WTC11 (cell line): ENCODE measurements at regions of chr17 and their contacts with region 1.

Region 1: DNA sequence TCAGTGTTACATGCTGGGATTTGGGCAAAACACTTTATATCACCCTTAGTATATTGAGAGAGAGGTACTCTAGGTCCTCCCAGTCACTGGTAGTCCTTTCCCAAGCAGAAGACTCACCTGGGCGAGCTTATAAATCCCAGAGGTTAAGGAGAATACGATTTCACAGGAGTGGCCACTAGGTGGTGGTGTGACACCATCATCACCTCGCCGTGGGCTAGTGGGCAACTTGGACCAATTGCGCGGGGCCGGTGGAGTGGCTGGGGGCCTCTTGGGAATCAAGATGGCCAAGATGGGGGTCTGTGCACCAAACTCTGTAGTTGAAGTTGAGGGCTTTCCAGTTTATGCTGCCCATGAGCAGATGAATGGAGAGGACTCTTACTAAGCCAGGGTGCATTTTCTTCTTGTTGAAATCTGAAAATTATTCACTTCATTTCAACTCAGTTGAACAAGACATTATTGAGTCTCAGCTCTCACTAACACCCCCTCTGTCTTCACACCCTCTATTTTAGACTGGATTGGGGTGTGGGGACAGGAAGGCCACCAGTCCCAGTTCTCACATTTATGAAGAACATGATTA is 38.2 kb upstream of the PIRT start:
- DNase-seq: peak; percentile 79
- ATAC-seq: peak; percentile 82
- H3K4me3 Mint-ChIP-seq: no peak overlapping the region
- H3K27ac Mint-ChIP-seq: no peak overlapping the region
- H3K4me1 Mint-ChIP-seq: no peaks in the 10 kb centered on the region
- H3K27me3 Mint-ChIP-seq: no peaks in the 10 kb centered on the region; the same call in none of the 2 replicates
- CTCF ChIP-seq: peak; percentile 59

Region 2: GRCh38 chr17:10699856-10700255 is 176.2 kb before region 1 on chr17:
- CTCF ChIA-PET with region 1: no interaction called
- POLR2A ChIA-PET with region 1: interaction called, 12 read pairs
- DNase-seq: no peak
- ATAC-seq: no peak
- H3K4me3 Mint-ChIP-seq: no peak overlapping the region
- H3K27ac Mint-ChIP-seq: no peak overlapping the region
- H3K4me1 Mint-ChIP-seq: peaks cover 10% of the 10 kb centered on the region
- H3K27me3 Mint-ChIP-seq: no peaks in the 10 kb centered on the region
- CTCF ChIP-seq: no peak

Region 3: DNA sequence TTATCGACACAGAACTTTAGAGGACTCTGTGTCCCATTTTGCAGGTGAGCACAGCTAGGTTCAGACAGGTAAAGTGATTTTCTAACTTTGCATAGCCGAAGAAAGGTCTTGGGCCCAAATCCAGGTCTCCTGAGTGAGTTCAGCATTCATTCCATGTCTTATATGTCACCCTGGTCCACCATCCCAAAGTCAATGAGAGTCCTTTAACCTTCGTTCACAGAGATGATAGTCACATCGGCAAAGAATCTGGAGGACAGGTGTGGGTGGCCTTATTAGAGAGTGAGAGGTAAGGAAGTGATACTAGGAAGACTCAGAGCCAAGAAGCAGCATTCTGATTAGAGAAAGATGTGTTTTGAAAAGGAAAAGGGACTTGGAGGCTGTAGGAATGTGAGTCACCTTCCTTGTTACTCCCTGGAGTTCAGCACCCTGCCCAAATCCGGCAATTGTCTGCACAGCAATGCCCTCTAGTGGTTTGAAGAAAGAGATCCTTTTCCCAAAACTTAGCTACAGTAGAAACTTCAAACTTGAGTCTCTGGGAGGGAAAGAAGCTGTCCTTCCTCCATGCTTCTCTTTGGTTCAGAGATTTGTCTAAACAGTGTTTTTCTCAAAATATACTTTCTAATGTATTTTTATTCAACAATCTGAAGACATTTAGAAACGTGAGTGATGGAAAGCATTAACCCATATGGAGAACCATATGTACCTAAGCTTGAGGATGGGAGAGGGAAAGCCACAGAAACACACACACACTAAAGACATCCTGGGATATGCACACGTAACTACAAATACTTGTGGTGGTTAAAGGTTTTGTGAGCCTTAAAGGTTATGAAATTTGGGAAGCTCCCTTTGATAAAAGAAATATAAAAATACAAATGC is 268.5 kb after region 1 on chr17:
- CTCF ChIA-PET with region 1: interaction called, 23 read pairs
- POLR2A ChIA-PET with region 1: no interaction called
- DNase-seq: peak; percentile 18
- ATAC-seq: no peak
- H3K4me3 Mint-ChIP-seq: no peak overlapping the region
- H3K27ac Mint-ChIP-seq: no peak overlapping the region
- H3K4me1 Mint-ChIP-seq: no peaks in the 10 kb centered on the region
- H3K27me3 Mint-ChIP-seq: peaks cover 7% of the 10 kb centered on the region
- CTCF ChIP-seq: peak; percentile 31; the same call in 1 of the 2 replicates

Region 4: GRCh38 chr17:11412654-11413053 is 536.6 kb after region 1 on chr17:
- CTCF ChIA-PET with region 1: no interaction called
- POLR2A ChIA-PET with region 1: no interaction called
- DNase-seq: no peak
- ATAC-seq: no peak
- H3K4me3 Mint-ChIP-seq: no peak overlapping the region
- H3K27ac Mint-ChIP-seq: no peak overlapping the region
- H3K4me1 Mint-ChIP-seq: no peaks in the 10 kb centered on the region
- H3K27me3 Mint-ChIP-seq: peaks cover 6% of the 10 kb centered on the region
- CTCF ChIP-seq: no peak